GM12878 (cell line): ENCODE measurements at regions of chr15 and their contacts with region 1.

Region 1: GRCh38 chr15:88982304-88982945 is 69.2 kb upstream of the MFGE8 start:
- DNase-seq: peak; percentile 83
- ATAC-seq: peak; percentile 97
- H3K4me3 ChIP-seq: no peak overlapping the region
- H3K27ac ChIP-seq: no peak overlapping the region
- H3K4me1 ChIP-seq: peaks cover 19% of the 10 kb centered on the region
- H3K27me3 ChIP-seq: no peaks in the 10 kb centered on the region
- CTCF ChIP-seq: no peak
- EP300 ChIP-seq: peak; percentile 56 to 82; a peak in 3 of 4 replicates
- POLR2A ChIP-seq: no peak
- RAD21 ChIP-seq: no peak

Region 2: DNA sequence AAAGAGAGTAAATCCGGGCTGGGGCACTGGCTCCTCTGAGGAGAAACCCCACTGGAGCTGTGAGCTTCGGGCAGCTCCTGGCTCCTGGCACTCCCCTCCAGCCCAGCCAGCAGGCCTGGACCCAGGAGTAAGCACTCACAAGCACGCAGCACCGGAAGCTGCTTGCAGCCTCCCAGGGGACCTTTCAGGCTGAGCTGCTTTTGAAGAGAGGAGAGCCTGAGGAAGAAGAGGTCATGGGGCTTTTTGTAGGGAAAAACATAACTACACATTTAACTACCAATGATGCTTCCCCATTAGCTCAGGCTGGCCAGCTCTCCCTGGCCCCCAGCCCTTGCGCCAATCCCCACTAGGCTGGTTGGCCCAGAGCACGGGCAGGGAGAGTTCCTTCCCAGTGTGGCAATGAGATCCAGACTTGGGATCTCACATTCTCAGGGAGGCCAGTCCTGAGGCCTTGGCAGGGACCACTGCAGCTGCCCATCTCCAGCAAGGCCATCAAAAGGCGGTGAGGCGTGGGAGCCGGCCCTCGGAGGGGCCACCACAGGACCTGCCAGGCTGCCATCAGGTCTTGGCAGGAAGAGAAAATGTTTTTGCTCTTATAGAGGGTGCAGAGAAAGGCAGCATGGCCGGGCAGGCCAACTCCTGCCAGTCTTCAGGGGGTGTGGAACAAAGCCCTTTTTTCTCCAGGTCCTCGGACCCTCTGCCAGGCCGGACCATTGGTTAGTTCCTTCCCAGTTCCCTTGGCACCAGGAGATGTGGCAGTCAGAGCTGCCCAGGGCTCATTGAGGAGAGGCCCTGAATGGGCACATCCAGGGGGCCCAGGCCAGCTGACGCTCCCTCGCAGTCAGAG is 27.8 kb before region 1 on chr15:
- CTCF ChIA-PET with region 1: no interaction called
- POLR2A ChIA-PET with region 1: no interaction called
- RAD21 ChIA-PET with region 1: interaction called, 3 read pairs
- SMC1A ChIA-PET with region 1: no interaction called
- in situ Hi-C with region 1: no loop called
- intact Hi-C with region 1: loop called (anchors 1 kb)
- DNase-seq: no peak
- ATAC-seq: peak; percentile 72
- H3K4me3 ChIP-seq: no peak overlapping the region
- H3K27ac ChIP-seq: no peak overlapping the region
- H3K4me1 ChIP-seq: peaks cover 6% of the 10 kb centered on the region
- H3K27me3 ChIP-seq: no peaks in the 10 kb centered on the region; a peak in 1 of 4 replicates
- CTCF ChIP-seq: no peak
- EP300 ChIP-seq: no peak
- POLR2A ChIP-seq: no peak
- RAD21 ChIP-seq: no peak

Region 3: DNA sequence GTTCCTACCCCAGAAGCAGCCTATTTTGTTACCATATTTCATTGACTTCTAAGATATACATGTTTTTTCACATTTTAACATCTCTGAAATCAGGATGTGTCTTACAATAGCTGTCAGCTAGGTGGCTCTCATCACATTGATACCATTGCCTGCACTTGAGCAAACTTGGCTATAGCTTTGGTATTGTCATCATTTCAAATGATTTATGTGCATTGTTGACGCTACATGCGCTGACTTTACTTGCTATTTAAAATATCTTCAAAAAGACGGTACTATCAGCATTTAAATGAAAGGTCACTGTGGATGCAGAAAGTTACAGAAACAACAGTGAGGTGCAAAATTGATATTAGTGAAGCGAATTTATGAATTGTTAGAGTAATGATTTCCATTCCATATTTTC is 51.9 kb after region 1 on chr15:
- CTCF ChIA-PET with region 1: no interaction called
- POLR2A ChIA-PET with region 1: no interaction called
- RAD21 ChIA-PET with region 1: no interaction called
- SMC1A ChIA-PET with region 1: no interaction called
- in situ Hi-C with region 1: no loop called
- intact Hi-C with region 1: no loop called
- DNase-seq: no peak
- ATAC-seq: no peak; the same call in 2 of the 3 replicates
- H3K4me3 ChIP-seq: no peak overlapping the region
- H3K27ac ChIP-seq: no peak overlapping the region
- H3K4me1 ChIP-seq: no peaks in the 10 kb centered on the region
- H3K27me3 ChIP-seq: no peaks in the 10 kb centered on the region
- CTCF ChIP-seq: peak in 2 of 3 experiments; percentile 15 to 34; a peak in 3 of 6 replicates
- EP300 ChIP-seq: no peak
- POLR2A ChIP-seq: no peak
- RAD21 ChIP-seq: 0 out of 2 replicates have a peak, but pooled peaks have one; percentile 18